ENCODE measurements at regions of chr9 and their contacts with region 1.

Region 1: GRCh38 chr9:68522131-68522530 is 18.6 kb downstream of the TMEM252 start:
- DNase-seq: peak; percentile 72 to 85 (median 82)
- H3K4me3 ChIP-seq: peak overlapping the region in 1 of 3 experiments; percentile 26
- H3K4me3 Mint-ChIP-seq: peak overlapping the region in 1 of 2 donors; percentile 81
- H3K27ac ChIP-seq: peak overlapping the region; percentile 57 to 76
- H3K27ac Mint-ChIP-seq: peak overlapping the region; percentile 82 to 91 (median 87)
- H3K4me1 ChIP-seq: peaks cover 18 to 20% of the 10 kb centered on the region in 2 donors
- H3K4me1 Mint-ChIP-seq: peaks cover 34% of the 10 kb centered on the region
- H3K27me3 ChIP-seq: no peaks in the 10 kb centered on the region
- H3K27me3 Mint-ChIP-seq: peaks cover 0 to 2% (median 0%) of the 10 kb centered on the region in 3 donors
- CTCF ChIP-seq: no peak

Region 2: DNA sequence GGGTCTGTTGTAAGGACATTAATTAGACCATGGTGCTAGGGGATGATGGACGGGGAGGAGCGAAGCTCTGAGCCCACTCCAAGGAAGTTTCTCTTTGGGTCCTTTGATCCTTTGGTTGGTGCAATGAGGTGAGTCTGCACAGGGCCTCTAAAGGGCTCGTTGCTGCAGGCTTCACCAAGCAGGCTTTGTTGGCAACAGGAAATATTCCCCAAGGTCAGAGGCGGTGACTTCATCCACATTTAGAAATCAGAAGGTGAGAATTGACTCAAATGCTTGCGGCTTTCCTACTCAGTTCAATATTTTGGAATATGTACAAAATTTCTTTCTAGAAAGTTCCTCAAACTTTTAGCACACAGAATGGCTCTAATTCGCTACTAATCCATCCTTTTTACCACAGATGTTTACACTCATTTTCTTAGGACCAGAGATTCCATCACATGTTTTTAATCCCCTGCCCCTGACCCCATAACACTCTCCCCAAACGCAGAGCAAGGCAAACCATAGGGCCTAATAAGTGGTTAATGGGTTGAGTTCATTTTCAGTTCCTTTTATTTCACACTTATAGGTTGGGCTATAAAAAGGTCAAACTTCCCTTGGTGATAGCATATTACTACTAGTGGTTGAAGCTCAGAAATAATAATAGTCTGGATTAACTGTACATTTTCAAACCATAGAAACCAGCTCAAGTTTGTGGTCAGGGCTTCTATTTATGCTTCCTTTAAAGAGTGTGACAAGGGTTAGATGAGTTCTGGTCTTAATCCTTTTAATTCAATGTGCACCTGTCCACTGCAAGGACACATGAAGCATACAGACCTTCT is 55.9 kb after region 1 on chr9:
- intact Hi-C with region 1: loop called in 1 of 2 experiments (anchors 10 kb)
- DNase-seq: no peak
- H3K4me3 ChIP-seq: no peak overlapping the region
- H3K4me3 Mint-ChIP-seq: no peak overlapping the region
- H3K27ac ChIP-seq: no peak overlapping the region
- H3K27ac Mint-ChIP-seq: peak overlapping the region in 3 of 7 donors; percentile 2 to 49 (median 12)
- H3K4me1 ChIP-seq: peaks cover 14 to 21% of the 10 kb centered on the region in 2 donors
- H3K4me1 Mint-ChIP-seq: peaks cover 15% of the 10 kb centered on the region
- H3K27me3 ChIP-seq: no peaks in the 10 kb centered on the region
- H3K27me3 Mint-ChIP-seq: peaks cover 0 to 1% (median 0%) of the 10 kb centered on the region in 3 donors
- CTCF ChIP-seq: no peak